ENCODE measurements at regions of chr9 and their contacts with region 1.

Region 1: DNA sequence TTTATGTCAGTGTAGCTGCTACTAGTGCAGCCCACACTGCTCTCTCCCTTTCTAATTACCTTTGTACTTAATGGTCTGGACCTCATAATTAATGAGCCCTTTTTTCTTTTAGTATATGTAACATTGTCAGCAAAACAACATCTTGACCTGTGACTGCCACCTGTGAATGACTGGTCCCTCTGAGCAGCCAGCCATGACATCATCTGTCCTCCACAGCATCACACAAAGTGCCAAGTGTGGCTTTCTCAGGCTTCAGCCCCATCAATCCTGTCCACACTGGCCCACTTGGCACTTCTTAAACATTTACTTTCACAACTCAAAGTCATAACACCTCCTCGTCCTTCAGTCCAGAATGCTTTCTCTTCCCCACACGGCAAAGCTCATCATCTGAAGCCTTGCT is 104.7 kb downstream of the GPR21 start:
- DNase-seq: no peak
- ATAC-seq: no peak
- H3K4me3 Mint-ChIP-seq: no peak overlapping the region
- H3K27ac Mint-ChIP-seq: no peak overlapping the region
- H3K4me1 Mint-ChIP-seq: peaks cover 3% of the 10 kb centered on the region
- H3K27me3 Mint-ChIP-seq: no peaks in the 10 kb centered on the region

Region 2: DNA sequence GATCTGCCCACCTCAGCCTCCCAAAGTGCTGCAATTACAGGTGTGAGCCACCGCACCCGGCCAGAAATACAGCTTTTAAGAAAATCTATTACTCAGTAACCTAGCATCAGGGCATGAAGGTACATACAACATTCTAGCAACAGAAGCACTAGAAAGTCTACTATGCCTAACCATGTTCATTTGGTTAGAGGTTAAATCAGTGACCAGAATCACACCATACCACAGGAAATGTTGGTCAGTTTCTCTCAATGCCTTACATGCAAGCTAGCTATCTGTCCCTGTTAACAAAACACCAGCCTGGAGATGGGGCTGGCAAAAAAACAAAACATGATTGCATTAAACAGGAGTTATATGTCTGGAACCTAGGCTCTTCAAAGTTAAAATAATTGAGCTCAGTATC is 26.1 kb after region 1 on chr9:
- CTCF ChIA-PET with region 1: no interaction called
- POLR2A ChIA-PET with region 1: no interaction called
- intact Hi-C with region 1: loop called in 1 of 2 experiments (anchors 2 kb)
- DNase-seq: no peak
- ATAC-seq: no peak
- H3K4me3 Mint-ChIP-seq: no peak overlapping the region
- H3K27ac Mint-ChIP-seq: no peak overlapping the region
- H3K4me1 Mint-ChIP-seq: peaks cover 4% of the 10 kb centered on the region
- H3K27me3 Mint-ChIP-seq: no peaks in the 10 kb centered on the region

Region 3: GRCh38 chr9:123331346-123332060 is 193.3 kb after region 1 on chr9:
- CTCF ChIA-PET with region 1: no interaction called
- POLR2A ChIA-PET with region 1: no interaction called
- intact Hi-C with region 1: no loop called
- DNase-seq: no peak
- ATAC-seq: no peak
- H3K4me3 Mint-ChIP-seq: no peak overlapping the region
- H3K27ac Mint-ChIP-seq: no peak overlapping the region
- H3K4me1 Mint-ChIP-seq: peaks cover 12% of the 10 kb centered on the region
- H3K27me3 Mint-ChIP-seq: no peaks in the 10 kb centered on the region